B cell (primary cell): ENCODE measurements at regions of chrX and their contacts with region 1.

Region 1: GRCh38 chrX:152958524-152959465 is 35.1 kb downstream of the PNMA5 start:
- DNase-seq: peak; percentile 93
- ATAC-seq: peak; percentile 97
- H3K4me3 ChIP-seq: peak overlapping the region in 4 of 5 experiments; percentile 31 to 46 (median 36)
- H3K4me3 Mint-ChIP-seq: peak overlapping the region; percentile 87
- H3K27ac ChIP-seq: peak overlapping the region; percentile 70 to 75
- H3K27ac Mint-ChIP-seq: peak overlapping the region; percentile 96
- H3K4me1 ChIP-seq: peaks cover 5 to 15% of the 10 kb centered on the region in 2 donors
- H3K4me1 Mint-ChIP-seq: peaks cover 8% of the 10 kb centered on the region
- H3K27me3 ChIP-seq: no peaks in the 10 kb centered on the region
- H3K27me3 Mint-ChIP-seq: no peaks in the 10 kb centered on the region
- CTCF ChIP-seq: peak; percentile 77

Region 2: GRCh38 chrX:152658302-152658701 is 300.5 kb before region 1 on chrX:
- CTCF ChIA-PET with region 1: no interaction called
- POLR2A ChIA-PET with region 1: no interaction called
- intact Hi-C with region 1: no loop called
- DNase-seq: no peak
- ATAC-seq: no peak
- H3K4me3 ChIP-seq: no peak overlapping the region
- H3K4me3 Mint-ChIP-seq: no peak overlapping the region
- H3K27ac ChIP-seq: no peak overlapping the region
- H3K27ac Mint-ChIP-seq: no peak overlapping the region
- H3K4me1 ChIP-seq: no peaks in the 10 kb centered on the region
- H3K4me1 Mint-ChIP-seq: no peaks in the 10 kb centered on the region
- H3K27me3 ChIP-seq: no peaks in the 10 kb centered on the region
- H3K27me3 Mint-ChIP-seq: no peaks in the 10 kb centered on the region
- CTCF ChIP-seq: no peak

Region 3: GRCh38 chrX:153470435-153471363 is 511.9 kb after region 1 on chrX and contains the start of gene HAUS7:
- CTCF ChIA-PET with region 1: interaction called, 4 read pairs
- POLR2A ChIA-PET with region 1: no interaction called
- intact Hi-C with region 1: loop called (anchors 1 kb)
- DNase-seq: peak; percentile 91
- ATAC-seq: peak; percentile 85
- H3K4me3 ChIP-seq: peak within 1 kb of the TSS; percentile 32 to 73 (median 66)
- H3K4me3 Mint-ChIP-seq: peak within 1 kb of the TSS; percentile 88
- H3K27ac ChIP-seq: peak within 1 kb of the TSS; percentile 34 to 39
- H3K27ac Mint-ChIP-seq: peak within 1 kb of the TSS; percentile 82
- H3K4me1 ChIP-seq: peaks cover 5 to 23% of the 10 kb centered on the region in 2 donors
- H3K4me1 Mint-ChIP-seq: peaks cover 16% of the 10 kb centered on the region
- H3K27me3 ChIP-seq: no peaks in the 10 kb centered on the region
- H3K27me3 Mint-ChIP-seq: no peaks in the 10 kb centered on the region
- CTCF ChIP-seq: peak; percentile 37
- total RNA-seq, gene HAUS7: 26.9 and 28.5 TPM in 2 replicates